H1 (cell line): ENCODE measurements at regions of chr21 and their contacts with region 1.

Region 1: GRCh38 chr21:44697811-44698734 is 1.1 kb downstream of the KRTAP10-12 start:
- DNase-seq: no peak
- H3K4me3 ChIP-seq: no peak overlapping the region
- H3K27ac ChIP-seq: peak overlapping the region; percentile 26; the same call in 1 of the 2 replicates
- H3K4me1 ChIP-seq: peaks cover 3 to 46% (median 29%) of the 10 kb centered on the region in 4 experiments
- H3K27me3 ChIP-seq: no peaks in the 10 kb centered on the region; a peak in 2 of 7 replicates
- CTCF ChIP-seq: no peak
- EP300 ChIP-seq: no peak
- POLR2A ChIP-seq: no peak
- RAD21 ChIP-seq: 0 out of 4 replicates have a peak, but pooled peaks of 1 of the 2 experiments have one; percentile 4

Region 2: GRCh38 chr21:44686000-44686781 is 11.9 kb before region 1 on chr21:
- CTCF ChIA-PET with region 1: interaction called, 13 read pairs
- POLR2A ChIA-PET with region 1: interaction called, 3 read pairs
- DNase-seq: no peak
- H3K4me3 ChIP-seq: no peak overlapping the region
- H3K27ac ChIP-seq: no peak overlapping the region
- H3K4me1 ChIP-seq: peaks cover 5 to 11% (median 9%) of the 10 kb centered on the region in 4 experiments
- H3K27me3 ChIP-seq: no peaks in the 10 kb centered on the region
- CTCF ChIP-seq: peak; percentile 9 to 31 (median 17); a peak in 3 of 4 replicates
- EP300 ChIP-seq: no peak
- POLR2A ChIP-seq: no peak
- RAD21 ChIP-seq: peak; percentile 12 to 36; a peak in 2 of 4 replicates

Region 3: GRCh38 chr21:44709426-44710293 is 11.6 kb after region 1 on chr21:
- CTCF ChIA-PET with region 1: interaction called, 11 read pairs
- POLR2A ChIA-PET with region 1: interaction called, 4 read pairs
- DNase-seq: peak in 1 of 2 experiments; percentile 49
- H3K4me3 ChIP-seq: peak overlapping the region; percentile 25 to 58 (median 40); a peak in 7 of 8 replicates
- H3K27ac ChIP-seq: no peak overlapping the region
- H3K4me1 ChIP-seq: peaks cover 0 to 58% (median 44%) of the 10 kb centered on the region in 4 experiments; a peak in 6 of 7 replicates
- H3K27me3 ChIP-seq: peaks cover 24 to 75% (median 68%) of the 10 kb centered on the region in 4 experiments
- CTCF ChIP-seq: no peak
- EP300 ChIP-seq: no peak
- POLR2A ChIP-seq: no peak
- RAD21 ChIP-seq: no peak